Dendritic cell treated with granulocyte-macrophage colony-stimulating factor and Interleukin-4, amounts not matched to agents 40 ng/mL and 50 ng/mL, for 4 days (primary cell): ENCODE measurements at regions of chr10 and their contacts with region 1.

Region 1: DNA sequence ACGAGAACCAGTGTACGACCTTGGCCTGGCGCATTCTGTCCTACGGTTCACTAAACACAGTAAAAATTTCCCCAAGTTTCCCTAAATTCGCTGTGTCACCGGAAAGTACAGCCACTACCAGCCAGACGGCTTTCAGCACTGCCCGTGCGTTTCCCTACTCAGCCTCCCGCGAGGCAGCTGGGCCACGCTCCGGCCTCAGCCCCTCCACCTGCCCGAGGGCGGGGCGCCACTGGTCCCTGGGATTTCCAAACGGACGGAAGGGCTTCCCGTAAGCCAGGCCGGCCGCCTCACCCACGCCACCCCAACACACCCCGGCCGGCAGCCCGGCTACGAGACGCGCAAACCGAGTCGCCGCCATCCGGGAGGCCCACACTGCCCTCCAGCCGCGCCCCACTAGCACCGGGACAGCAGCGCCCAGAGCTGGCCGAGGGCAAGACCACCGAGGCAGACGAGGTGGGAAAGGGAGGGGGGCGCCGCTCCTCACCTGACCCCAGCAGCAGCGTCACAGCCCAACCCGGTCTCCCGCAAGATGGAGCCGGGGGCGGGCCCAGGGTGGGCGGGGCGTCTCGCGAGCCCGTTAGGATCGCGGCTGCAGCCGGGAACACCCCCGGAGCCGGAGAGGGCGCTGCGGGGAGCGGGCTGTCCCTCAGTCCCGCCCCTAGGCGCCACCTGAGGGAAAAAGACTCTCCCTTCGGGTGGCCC is at the start of gene ANXA7:
- H3K4me3 Mint-ChIP-seq: peak within 1 kb of the TSS; percentile 95
- H3K27ac Mint-ChIP-seq: peak within 1 kb of the TSS; percentile 95
- H3K4me1 Mint-ChIP-seq: peaks cover 31% of the 10 kb centered on the region
- H3K27me3 Mint-ChIP-seq: peaks cover 16% of the 10 kb centered on the region

Region 2: DNA sequence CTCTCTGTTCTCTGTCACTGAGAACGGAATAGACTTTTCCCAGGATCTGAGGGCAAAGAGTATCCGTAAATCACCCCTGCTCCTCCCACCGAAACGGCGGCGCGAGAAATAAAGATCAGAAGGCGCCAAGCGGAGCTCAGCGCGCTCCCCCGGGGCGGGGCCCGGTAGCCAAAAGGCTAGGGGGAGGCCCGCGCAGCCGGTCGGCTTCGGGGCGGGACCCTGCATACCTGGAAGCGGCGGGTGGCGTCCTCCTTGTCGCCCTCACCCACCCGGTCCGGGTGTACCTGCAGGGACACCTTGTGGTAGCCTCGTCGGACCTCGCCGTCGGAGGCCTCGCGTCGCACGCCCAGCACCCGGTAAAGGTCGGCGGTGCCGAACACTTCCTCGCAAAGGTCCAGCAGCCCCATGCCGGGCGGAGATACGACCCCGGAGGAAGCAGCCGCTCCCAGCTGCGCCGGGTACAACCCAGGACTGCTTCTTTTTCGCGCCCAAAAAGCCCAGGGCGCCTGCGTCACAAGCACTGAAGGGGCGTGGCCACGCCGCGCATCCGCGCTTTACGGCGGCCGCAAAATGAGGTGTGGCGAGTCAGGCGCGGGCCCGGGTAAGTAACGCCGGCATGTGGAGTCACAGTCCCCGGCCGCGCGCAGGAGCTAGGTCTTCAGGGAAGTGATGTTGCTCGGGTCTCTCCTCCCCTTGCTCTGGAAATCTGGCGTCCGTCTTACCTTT is 166.7 kb before region 1 on chr10 and contains the start of gene DNAJC9:
- intact Hi-C with region 1: loop called (anchors 1 kb)
- H3K4me3 Mint-ChIP-seq: peak within 1 kb of the TSS; percentile 88
- H3K27ac Mint-ChIP-seq: peak within 1 kb of the TSS; percentile 89
- H3K4me1 Mint-ChIP-seq: peaks cover 54% of the 10 kb centered on the region
- H3K27me3 Mint-ChIP-seq: no peaks in the 10 kb centered on the region

Region 3: DNA sequence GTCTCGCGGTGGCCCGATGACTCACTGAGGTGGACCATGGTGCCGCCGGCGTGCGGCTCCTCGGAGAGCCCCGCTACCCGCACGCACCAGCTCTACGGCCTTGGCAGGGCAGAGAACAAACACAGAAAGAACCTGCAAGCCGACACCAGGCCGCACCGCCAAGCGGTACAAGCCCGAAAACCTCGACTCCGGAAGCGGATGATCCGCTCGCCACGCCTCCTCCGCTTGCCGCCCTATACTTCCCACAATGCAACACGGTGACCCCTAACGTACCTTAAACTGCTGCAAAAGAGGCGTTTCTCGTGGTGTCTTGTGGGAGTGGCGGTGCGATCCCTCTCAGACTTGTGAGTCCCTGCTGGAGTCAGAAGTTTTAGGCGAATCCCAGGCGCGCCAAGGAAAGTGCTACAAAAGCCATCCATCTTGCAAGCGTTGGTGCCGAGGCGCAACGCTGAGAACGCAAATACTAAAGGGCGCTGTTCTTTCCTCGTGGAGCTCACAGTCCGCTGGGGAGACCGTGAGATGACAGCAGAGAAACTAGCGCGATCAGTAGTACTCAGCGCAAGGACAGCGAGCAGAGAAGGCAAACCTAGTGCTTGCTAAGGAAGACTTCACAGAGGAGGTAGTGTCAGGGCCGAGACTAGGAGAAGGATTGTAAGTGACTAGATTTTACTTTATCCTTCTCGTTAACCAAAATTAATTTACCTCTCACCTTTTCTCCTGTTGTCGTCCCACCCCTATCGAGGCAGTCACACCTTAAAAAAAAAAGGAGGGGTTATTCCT is 161.0 kb before region 1 on chr10 and contains the start of gene MRPS16:
- intact Hi-C with region 1: loop called (anchors 1 kb)
- H3K4me3 Mint-ChIP-seq: peak within 1 kb of the TSS; percentile 95
- H3K27ac Mint-ChIP-seq: peak within 1 kb of the TSS; percentile 97
- H3K4me1 Mint-ChIP-seq: peaks cover 25% of the 10 kb centered on the region
- H3K27me3 Mint-ChIP-seq: no peaks in the 10 kb centered on the region

Region 4: GRCh38 chr10:74021248-74022055 is 607.8 kb after region 1 on chr10:
- intact Hi-C with region 1: no loop called
- H3K4me3 Mint-ChIP-seq: peak overlapping the region; percentile 10
- H3K27ac Mint-ChIP-seq: peak overlapping the region; percentile 64
- H3K4me1 Mint-ChIP-seq: peaks cover 66% of the 10 kb centered on the region
- H3K27me3 Mint-ChIP-seq: no peaks in the 10 kb centered on the region